ENCODE measurements at regions of chr1 and their contacts with region 1.

Region 1: DNA sequence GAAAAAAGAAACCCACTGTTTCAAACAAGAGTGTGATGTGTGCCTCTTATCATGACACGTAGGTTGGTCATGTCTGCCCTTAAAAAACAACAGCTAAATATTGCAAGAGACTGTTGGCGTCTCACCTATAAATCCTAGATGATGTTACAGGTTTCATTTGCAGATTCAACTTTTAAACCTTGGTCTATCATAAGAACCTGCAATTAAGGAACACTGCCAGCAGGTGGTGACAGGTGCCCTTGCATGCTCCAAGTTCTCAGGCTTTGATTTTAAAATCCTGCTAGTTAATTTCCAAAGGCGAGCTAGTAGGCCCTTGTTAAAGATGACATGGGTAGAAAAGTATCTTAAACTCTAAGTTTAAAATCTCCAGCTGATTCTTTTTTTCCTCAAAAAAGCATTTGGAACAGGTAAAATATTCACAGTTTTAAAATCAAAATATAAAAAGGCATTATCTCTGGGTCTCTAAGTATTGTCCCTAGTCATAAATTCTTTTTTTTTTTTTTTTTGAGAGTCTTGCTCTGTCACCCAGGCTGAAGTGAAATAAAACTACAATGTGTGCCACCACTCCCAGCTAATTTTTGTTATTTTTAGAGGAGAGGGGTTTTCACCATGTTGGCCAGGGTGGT is 39.1 kb downstream of the CLSTN1 start:
- DNase-seq: peak; percentile 56

Region 2: GRCh38 chr1:9181176-9181906 is 603.3 kb before region 1 on chr1:
- CTCF ChIA-PET with region 1: no interaction called
- POLR2A ChIA-PET with region 1: no interaction called
- DNase-seq: peak; percentile 85

Region 3: DNA sequence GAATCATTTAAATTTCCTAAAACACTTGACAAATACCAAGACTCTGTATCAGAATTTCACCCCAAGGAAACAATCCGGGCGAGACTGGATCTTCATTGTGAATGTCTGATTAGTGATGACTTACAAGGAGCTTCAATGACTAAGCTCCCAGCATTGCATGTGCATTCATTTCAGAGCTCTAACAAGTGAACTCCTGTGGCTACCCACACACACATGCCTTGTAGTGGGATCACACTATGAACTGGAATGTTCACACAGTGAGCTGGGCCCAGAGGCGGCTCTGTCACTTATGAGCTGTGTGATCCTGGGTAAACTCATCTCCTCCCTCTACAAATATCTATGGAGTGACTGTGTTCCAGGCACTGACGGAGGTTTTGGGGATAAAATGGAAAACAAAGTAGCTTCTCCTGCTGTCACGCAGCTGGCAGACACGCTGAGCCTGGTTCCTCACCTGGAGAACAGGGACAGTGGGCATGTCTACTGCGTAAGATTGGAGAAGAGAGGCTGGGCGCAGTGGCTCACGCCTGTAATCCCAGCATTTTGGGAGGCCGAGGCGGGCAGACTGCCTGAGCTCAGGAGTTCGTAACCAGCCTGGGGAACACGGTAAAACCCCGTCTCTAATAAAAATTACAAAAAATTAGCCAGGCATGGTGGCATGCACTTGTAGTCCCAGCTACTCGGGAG is 17.7 kb before region 1 on chr1:
- CTCF ChIA-PET with region 1: interaction called, 14 read pairs
- POLR2A ChIA-PET with region 1: no interaction called
- DNase-seq: no peak

Region 4: DNA sequence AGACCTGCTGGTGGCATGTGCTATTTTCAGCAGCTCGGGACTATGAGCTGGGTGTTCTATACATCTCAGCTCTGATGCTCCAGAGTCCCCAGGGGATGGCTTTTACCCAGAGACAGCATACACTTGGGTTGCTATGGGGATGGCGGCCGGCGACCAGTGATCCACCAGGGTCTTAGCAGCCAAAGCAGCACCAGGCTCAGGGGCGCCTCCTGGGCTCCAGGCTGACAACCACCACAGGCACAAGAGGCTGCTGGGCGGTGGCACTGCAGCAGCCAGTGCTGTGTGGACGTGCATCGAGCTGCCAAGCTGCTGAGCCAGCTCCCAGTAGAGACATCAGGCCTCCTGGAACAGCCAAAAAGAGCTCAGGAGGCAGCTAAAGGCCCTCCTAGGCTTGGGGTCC is 76.7 kb after region 1 on chr1:
- CTCF ChIA-PET with region 1: interaction called, 16 read pairs
- POLR2A ChIA-PET with region 1: interaction called, 4 read pairs
- DNase-seq: no peak

Region 5: DNA sequence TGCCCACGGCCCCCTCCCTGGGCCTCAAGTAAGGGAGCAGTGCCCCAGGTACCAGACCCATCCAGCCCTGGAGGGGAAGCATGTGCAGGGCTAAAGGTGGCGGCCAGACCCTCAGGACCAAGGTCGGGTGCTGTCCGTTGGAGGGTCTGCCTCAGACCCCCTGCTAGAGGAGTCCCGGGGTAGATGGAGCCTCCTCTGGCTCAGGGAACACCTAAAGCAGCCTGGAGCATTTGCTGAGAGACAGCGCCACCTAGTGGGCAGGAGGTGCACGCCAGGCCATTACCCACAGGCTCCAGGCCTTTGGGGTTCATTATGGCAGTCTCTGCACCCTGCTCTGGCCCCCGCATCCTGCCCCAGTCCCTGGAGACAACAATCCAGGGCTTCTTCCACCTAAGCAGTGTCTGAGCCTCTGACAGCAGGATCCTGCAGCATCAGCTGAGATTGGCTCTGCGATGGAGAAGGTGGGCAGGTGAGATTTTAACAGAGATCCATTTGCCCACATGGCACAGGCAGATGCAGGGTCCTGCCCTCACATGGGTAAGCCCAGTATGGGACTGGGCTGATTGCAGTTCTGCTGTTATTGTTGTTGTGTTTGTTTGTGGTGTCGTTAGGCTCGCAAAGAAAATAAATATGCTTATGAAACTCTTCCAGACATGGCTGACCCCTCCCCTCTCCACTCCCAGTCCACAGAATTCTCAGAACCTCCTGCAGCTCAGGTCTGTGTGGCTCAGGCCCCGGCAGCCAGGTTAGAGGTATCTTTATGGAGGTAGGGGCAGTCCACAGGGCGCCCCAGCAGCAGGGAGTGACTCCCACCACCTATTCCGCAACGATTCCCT is 83.0 kb after region 1 on chr1:
- CTCF ChIA-PET with region 1: interaction called, 16 read pairs
- POLR2A ChIA-PET with region 1: interaction called, 4 read pairs
- DNase-seq: peak; percentile 87

Measured in HEK293T (cell line).